Spleen (tissue), 13 donors: ENCODE measurements at regions of chr12 and their contacts with region 1.

Region 1: GRCh38 chr12:107685360-107686248 is at the start of gene PWP1:
- DNase-seq: peak; percentile 98
- H3K4me3 ChIP-seq: peak within 1 kb of the TSS; percentile 78 to 95 (median 92)
- H3K27ac ChIP-seq: peak within 1 kb of the TSS; percentile 52 to 88 (median 78)
- H3K4me1 ChIP-seq: peaks cover 0 to 35% (median 26%) of the 10 kb centered on the region in 6 donors
- H3K27me3 ChIP-seq: no peaks in the 10 kb centered on the region
- CTCF ChIP-seq: no peak
- POLR2A ChIP-seq: peak in 2 of 3 donors; percentile 60 to 78
- total RNA-seq, gene PWP1: 24.5 to 78.5 (median 32.0) TPM

Region 2: GRCh38 chr12:107760809-107761501 is 75.4 kb after region 1 on chr12 and contains the start of gene PRDM4:
- intact Hi-C with region 1: loop called (anchors 10 kb)
- DNase-seq: peak; percentile 98
- H3K4me3 ChIP-seq: peak within 1 kb of the TSS; percentile 56 to 90 (median 84)
- H3K27ac ChIP-seq: peak within 1 kb of the TSS; percentile 50 to 91 (median 81)
- H3K4me1 ChIP-seq: peaks cover 16 to 50% (median 39%) of the 10 kb centered on the region in 6 donors
- H3K27me3 ChIP-seq: no peaks in the 10 kb centered on the region
- CTCF ChIP-seq: peak in 7 of 11 experiments; percentile 24 to 76 (median 66)
- POLR2A ChIP-seq: peak; percentile 48 to 88 (median 84)
- total RNA-seq, gene PRDM4: 24.9 to 38.4 (median 30.0) TPM